Calu3 (cell line): ENCODE measurements at regions of chr6 and their contacts with region 1.

Region 1: DNA sequence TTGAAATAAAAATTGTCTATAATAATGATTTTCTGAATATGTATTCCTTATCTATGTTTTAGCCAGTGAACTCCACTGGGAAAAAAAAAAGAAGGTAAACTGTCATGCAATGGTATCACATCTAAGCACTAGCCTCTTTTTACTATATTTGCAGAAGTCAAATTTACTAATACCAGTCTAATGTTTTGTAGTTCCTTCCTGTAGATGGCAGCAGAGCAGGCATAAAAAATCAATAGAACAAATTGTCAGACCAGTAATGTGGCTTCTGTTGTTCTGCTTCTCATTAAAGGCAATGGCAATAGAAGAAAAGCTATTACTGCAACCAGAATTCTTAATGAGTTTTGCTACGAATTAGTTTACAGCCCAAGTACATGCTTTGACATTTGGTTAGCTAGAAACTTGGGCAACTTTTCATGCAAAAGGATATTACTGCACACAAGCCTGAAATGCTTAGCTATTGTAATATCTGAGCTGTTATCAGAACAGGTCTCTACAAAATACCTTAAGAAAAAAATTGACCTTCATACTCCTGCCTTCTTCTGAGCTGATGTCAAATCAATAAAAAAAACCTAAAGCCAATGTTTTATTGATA is 476.9 kb downstream of the KHDRBS2 start:
- DNase-seq: no peak
- H3K4me3 Mint-ChIP-seq: no peak overlapping the region
- H3K27ac Mint-ChIP-seq: no peak overlapping the region
- H3K4me1 Mint-ChIP-seq: no peaks in the 10 kb centered on the region
- H3K27me3 Mint-ChIP-seq: no peaks in the 10 kb centered on the region
- CTCF ChIP-seq: no peak

Region 2: DNA sequence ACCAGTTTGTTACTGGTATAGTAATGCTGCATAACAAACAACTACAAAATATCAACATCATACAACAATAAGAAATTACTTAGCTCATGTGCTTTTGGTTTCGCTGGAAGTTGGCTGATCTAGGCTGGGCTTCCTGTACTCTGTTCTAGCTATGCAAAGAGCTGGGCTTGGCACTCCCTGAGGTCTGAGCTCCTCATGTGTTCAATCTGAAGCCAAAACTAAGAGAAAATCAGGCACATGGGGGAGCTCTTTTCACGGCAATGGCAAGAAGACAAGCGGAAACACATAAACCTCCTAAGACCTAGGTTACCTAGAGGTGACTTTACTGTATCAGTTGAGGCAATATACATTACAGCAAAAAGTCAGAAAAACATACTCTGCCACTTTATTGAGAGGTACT is 97.3 kb before region 1 on chr6:
- CTCF ChIA-PET with region 1: no interaction called
- intact Hi-C with region 1: no loop called
- DNase-seq: no peak
- H3K4me3 Mint-ChIP-seq: no peak overlapping the region
- H3K27ac Mint-ChIP-seq: no peak overlapping the region
- H3K4me1 Mint-ChIP-seq: no peaks in the 10 kb centered on the region
- H3K27me3 Mint-ChIP-seq: no peaks in the 10 kb centered on the region
- CTCF ChIP-seq: no peak

Region 3: DNA sequence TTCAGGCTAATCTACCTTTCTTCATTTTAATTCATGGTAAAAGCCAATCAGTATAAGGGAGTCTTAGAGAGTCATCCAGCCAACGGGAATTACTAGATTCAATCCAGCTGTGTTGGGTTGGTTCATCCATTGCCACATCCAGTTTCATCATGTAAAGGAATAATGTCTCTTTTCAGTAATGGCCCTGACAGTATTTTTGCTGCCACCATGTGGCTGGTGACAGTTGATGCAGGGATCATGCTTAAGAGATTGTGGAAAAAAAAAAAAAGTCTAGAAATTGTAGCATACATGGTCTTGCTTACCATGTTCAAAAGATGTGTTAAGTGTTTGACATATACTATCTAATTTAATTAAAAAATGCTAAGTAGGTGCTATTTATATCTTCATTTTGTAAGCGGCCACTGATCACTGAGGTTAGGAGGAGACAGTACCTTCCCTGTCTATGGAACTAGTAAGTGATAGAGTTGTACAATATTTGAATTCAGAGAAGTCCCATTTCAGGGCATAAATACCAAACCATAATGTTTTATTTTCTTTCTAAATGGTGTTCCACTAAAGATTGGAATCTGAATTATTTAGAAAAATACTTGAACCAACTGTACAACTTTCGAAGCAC is 341.1 kb after region 1 on chr6:
- CTCF ChIA-PET with region 1: no interaction called
- intact Hi-C with region 1: loop called (anchors 1 kb)
- DNase-seq: peak; percentile 21
- H3K4me3 Mint-ChIP-seq: no peak overlapping the region
- H3K27ac Mint-ChIP-seq: no peak overlapping the region
- H3K4me1 Mint-ChIP-seq: no peaks in the 10 kb centered on the region
- H3K27me3 Mint-ChIP-seq: no peaks in the 10 kb centered on the region
- CTCF ChIP-seq: peak; percentile 26